RWPE1 (cell line): ENCODE measurements at regions of chr6 and their contacts with region 1.

Region 1: GRCh38 chr6:57316581-57317059 is 810 bp upstream of the PRIM2 start:
- DNase-seq: peak; percentile 74
- H3K27ac ChIP-seq: peak overlapping the region; percentile 80
- CTCF ChIP-seq: peak; percentile 78

Region 2: DNA sequence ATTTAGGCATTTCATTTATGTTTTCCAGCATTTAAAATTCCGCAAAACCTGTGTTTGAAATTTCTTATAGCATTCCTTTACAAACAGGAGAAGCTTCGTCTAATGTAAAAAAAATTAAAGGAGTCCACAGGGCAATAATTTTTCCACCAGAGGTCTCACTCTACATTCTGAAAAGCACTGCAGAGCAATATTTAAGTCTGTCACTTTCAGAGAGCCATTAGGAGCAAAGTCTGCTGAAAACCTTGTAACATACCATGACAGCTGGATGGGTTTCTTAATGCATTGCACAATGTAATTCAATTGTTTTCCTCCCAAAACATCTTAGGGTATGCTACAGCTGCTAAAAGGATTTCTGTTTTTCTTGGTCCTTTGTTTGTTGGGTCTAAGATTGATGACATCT is 126.5 kb before region 1 on chr6:
- CTCF ChIA-PET with region 1: interaction called, 20 read pairs
- POLR2A ChIA-PET with region 1: no interaction called
- DNase-seq: peak; percentile 6
- H3K27ac ChIP-seq: no peak overlapping the region
- CTCF ChIP-seq: peak; percentile 36; the same call in 1 of the 2 replicates